Naive thymus-derived CD4-positive, alpha-beta T cell (primary cell): ENCODE measurements at regions of chr5 and their contacts with region 1.

Region 1: DNA sequence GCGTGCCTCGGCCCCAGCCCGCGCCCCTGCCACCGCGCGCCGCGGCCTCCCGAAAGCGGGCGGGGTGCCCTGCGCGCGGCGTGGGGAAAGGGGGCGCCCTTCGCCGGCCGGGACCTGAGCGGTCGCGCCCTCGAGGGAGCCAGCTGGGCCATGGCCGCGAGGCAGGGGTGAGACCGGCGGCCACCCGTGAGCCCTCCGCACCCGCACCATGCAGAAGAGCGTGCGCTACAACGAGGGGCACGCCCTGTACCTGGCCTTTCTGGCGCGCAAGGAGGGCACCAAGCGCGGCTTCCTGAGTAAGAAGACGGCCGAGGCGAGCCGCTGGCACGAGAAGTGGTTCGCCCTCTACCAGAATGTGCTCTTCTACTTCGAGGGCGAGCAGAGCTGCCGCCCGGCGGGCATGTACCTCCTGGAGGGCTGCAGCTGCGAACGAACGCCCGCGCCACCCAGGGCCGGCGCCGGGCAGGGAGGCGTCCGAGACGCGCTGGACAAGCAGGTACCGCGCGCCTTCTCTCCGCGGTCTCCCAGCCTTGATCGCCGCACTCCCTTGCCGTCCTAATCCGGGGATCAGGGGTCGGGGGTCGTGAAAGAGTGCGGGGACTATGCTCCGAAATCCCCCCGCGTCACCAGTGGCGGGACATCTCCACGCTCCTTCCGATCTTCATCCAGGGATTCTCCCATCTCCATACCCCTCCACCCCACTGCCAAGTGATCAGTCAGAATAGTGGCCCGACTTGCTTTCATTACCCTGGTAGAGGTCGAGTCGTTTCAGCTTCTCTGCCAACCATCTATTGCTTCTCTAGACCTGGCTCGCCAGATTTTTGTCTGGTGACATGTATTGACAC is 590 bp downstream of the RASGRF2 start:
- DNase-seq: peak in 8 of 9 donors; percentile 23 to 67 (median 50)
- ATAC-seq: peak; percentile 53
- H3K4me3 ChIP-seq: peak overlapping the region; percentile 85
- H3K4me3 Mint-ChIP-seq: peak overlapping the region; percentile 87 to 99 (median 94)
- H3K27ac ChIP-seq: peak overlapping the region; percentile 70
- H3K27ac Mint-ChIP-seq: peak overlapping the region; percentile 79 to 98 (median 88)
- H3K4me1 ChIP-seq: peaks cover 22 to 35% of the 10 kb centered on the region in 2 donors
- H3K4me1 Mint-ChIP-seq: peaks cover 35 to 76% (median 63%) of the 10 kb centered on the region in 7 donors
- H3K27me3 ChIP-seq: no peaks in the 10 kb centered on the region
- H3K27me3 Mint-ChIP-seq: peaks cover 0 to 12% (median 5%) of the 10 kb centered on the region in 5 donors

Region 2: DNA sequence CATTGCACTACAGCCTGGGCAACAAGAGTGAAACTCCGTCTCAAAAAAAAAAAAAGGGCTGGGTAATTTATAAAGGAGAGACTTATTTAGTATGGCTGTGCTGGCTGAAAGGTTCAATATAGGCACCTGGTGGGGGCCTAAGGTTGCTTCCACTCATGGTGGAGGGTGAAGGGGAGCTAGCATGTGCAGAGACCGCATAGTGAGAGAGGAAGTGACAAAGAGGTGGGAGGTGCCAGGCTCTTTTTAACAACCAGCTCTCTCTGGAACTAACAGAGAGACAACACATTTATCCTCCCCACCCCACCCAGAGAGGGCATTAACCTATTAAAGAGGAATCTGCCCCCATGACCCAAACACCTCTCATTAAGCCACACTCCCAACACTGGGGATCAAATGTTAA is 676.0 kb before region 1 on chr5:
- CTCF ChIA-PET with region 1: no interaction called
- POLR2A ChIA-PET with region 1: no interaction called
- intact Hi-C with region 1: no loop called
- DNase-seq: peak in 7 of 9 donors; percentile 21 to 49 (median 34)
- ATAC-seq: peak; percentile 83
- H3K4me3 ChIP-seq: no peak overlapping the region
- H3K4me3 Mint-ChIP-seq: peak overlapping the region in 9 of 10 donors; percentile 14 to 69 (median 49)
- H3K27ac ChIP-seq: no peak overlapping the region
- H3K27ac Mint-ChIP-seq: peak overlapping the region in 8 of 9 donors; percentile 58 to 93 (median 74)
- H3K4me1 ChIP-seq: peaks cover 0 to 10% of the 10 kb centered on the region in 2 donors
- H3K4me1 Mint-ChIP-seq: peaks cover 12 to 39% (median 27%) of the 10 kb centered on the region in 7 donors
- H3K27me3 ChIP-seq: no peaks in the 10 kb centered on the region
- H3K27me3 Mint-ChIP-seq: no peaks in the 10 kb centered on the region

Region 3: DNA sequence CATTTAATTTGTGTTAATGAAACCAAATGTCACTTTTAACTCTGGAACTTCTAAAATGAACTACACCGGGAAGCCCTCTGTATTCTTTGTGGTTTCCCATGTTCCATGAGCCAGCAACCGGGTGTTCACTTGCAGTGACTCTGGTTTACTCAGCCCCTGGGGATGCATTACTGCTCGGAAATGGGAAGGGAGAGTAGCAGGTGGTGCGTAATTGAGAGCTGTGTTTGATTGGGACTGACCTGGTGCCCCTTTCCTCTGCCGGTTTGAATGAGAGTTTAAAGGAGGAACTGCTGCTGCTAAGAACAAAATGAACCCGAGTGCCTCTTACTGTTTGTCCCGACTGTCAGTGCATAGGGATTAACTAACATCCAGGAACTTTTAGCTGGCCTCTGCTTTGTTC is 205.9 kb before region 1 on chr5:
- CTCF ChIA-PET with region 1: no interaction called
- POLR2A ChIA-PET with region 1: no interaction called
- intact Hi-C with region 1: loop called in 1 of 2 experiments (anchors 1 kb)
- DNase-seq: peak in 2 of 9 donors; percentile 11 to 49
- ATAC-seq: no peak
- H3K4me3 ChIP-seq: peak overlapping the region; percentile 7
- H3K4me3 Mint-ChIP-seq: peak overlapping the region; percentile 49 to 87 (median 78)
- H3K27ac ChIP-seq: peak overlapping the region; percentile 57
- H3K27ac Mint-ChIP-seq: peak overlapping the region; percentile 45 to 93 (median 79)
- H3K4me1 ChIP-seq: peaks cover 20 to 28% of the 10 kb centered on the region in 2 donors
- H3K4me1 Mint-ChIP-seq: peaks cover 30 to 61% (median 47%) of the 10 kb centered on the region in 7 donors
- H3K27me3 ChIP-seq: no peaks in the 10 kb centered on the region
- H3K27me3 Mint-ChIP-seq: no peaks in the 10 kb centered on the region

Region 4: DNA sequence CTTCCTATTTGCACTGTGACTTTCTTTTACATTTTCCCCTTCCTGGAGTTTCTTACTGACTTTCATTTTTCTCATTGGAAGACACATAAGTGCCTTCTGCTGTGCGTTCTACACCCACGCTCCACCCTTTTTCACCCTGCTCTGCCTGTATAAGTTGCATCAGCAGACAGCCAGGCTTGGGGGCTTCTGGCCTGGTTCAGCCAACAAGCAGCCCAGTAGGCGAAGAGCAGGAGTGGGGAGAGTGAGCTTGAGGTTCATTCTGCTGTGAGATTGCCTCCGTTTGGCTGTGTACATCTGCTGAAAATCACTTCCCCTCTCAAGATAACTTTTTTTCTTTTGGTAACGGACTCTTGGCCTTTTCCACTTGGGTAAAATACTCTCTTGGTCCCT is 37.8 kb after region 1 on chr5:
- CTCF ChIA-PET with region 1: no interaction called
- POLR2A ChIA-PET with region 1: interaction called, 8 read pairs
- intact Hi-C with region 1: loop called in 1 of 2 experiments (anchors 2 kb)
- DNase-seq: peak in 2 of 9 donors; percentile 20 to 40
- ATAC-seq: peak; percentile 18
- H3K4me3 ChIP-seq: peak overlapping the region; percentile 62
- H3K4me3 Mint-ChIP-seq: peak overlapping the region; percentile 69 to 87 (median 86)
- H3K27ac ChIP-seq: peak overlapping the region; percentile 74
- H3K27ac Mint-ChIP-seq: peak overlapping the region; percentile 74 to 99 (median 93)
- H3K4me1 ChIP-seq: peaks cover 0 to 47% of the 10 kb centered on the region in 2 donors
- H3K4me1 Mint-ChIP-seq: peaks cover 22 to 94% (median 78%) of the 10 kb centered on the region in 7 donors
- H3K27me3 ChIP-seq: no peaks in the 10 kb centered on the region
- H3K27me3 Mint-ChIP-seq: no peaks in the 10 kb centered on the region

Region 5: DNA sequence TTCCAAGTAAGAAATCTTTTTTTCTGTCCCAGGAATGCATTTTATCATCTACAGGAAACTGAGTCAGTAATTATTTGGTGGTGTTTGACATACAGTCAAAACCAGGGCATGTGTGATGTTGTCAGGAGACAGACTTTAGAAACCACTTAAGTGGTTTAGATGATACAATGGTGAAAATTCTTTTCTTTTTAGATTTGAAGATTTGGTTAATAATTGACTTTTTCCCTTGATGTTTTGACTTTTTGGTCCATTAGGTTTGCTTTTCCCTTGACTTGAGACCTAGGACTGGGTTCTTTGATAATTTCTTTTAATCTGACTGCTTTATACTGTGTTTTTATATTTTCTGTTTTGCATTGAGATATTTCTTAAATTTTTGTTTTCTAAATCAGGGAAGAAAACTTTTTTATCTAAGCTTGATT is 84.6 kb after region 1 on chr5:
- CTCF ChIA-PET with region 1: no interaction called
- POLR2A ChIA-PET with region 1: interaction called, 3 read pairs
- intact Hi-C with region 1: loop called in 1 of 2 experiments (anchors 1 kb)
- DNase-seq: no peak
- ATAC-seq: no peak
- H3K4me3 ChIP-seq: no peak overlapping the region
- H3K4me3 Mint-ChIP-seq: no peak overlapping the region
- H3K27ac ChIP-seq: no peak overlapping the region
- H3K27ac Mint-ChIP-seq: peak overlapping the region in 3 of 9 donors; percentile 5 to 38 (median 23)
- H3K4me1 ChIP-seq: peaks cover 0 to 11% of the 10 kb centered on the region in 2 donors
- H3K4me1 Mint-ChIP-seq: peaks cover 11 to 92% (median 73%) of the 10 kb centered on the region in 7 donors
- H3K27me3 ChIP-seq: no peaks in the 10 kb centered on the region
- H3K27me3 Mint-ChIP-seq: no peaks in the 10 kb centered on the region

Region 6: DNA sequence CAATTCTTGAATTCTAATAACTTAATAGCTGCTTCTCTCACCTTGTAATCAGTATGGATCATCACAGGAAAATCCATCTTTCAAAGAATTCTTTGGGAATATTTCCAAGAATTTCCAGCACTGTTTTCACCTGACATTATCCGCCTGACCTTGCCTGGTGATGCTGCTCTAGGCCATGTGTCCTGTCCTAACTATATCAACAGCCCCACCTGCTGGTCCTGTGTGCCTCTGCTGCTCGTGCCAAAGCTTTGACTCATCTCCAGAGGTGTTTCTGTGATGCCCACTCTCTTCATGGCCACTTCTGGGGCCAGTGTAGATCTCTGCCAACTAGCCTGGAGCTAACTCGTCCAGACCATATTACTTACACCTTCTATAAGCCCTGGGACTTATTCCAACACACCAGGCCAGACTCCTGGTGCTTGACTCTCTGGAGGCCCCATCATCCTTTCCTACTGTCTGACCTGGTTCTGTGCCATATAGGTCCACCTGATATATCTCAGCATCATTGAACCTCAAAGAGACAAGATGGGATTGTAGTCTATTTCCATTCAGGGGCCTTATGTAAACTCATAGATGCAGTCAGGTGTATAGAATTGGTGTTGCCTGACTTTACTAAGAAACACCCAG is 204.9 kb after region 1 on chr5:
- CTCF ChIA-PET with region 1: no interaction called
- POLR2A ChIA-PET with region 1: no interaction called
- intact Hi-C with region 1: loop called in 1 of 2 experiments (anchors 10 kb)
- DNase-seq: peak in 8 of 9 donors; percentile 18 to 55 (median 43)
- ATAC-seq: peak; percentile 73
- H3K4me3 ChIP-seq: no peak overlapping the region
- H3K4me3 Mint-ChIP-seq: no peak overlapping the region
- H3K27ac ChIP-seq: no peak overlapping the region
- H3K27ac Mint-ChIP-seq: peak overlapping the region in 3 of 9 donors; percentile 7 to 20 (median 14)
- H3K4me1 ChIP-seq: no peaks in the 10 kb centered on the region
- H3K4me1 Mint-ChIP-seq: peaks cover 0 to 13% (median 3%) of the 10 kb centered on the region in 7 donors
- H3K27me3 ChIP-seq: no peaks in the 10 kb centered on the region
- H3K27me3 Mint-ChIP-seq: no peaks in the 10 kb centered on the region

Region 7: DNA sequence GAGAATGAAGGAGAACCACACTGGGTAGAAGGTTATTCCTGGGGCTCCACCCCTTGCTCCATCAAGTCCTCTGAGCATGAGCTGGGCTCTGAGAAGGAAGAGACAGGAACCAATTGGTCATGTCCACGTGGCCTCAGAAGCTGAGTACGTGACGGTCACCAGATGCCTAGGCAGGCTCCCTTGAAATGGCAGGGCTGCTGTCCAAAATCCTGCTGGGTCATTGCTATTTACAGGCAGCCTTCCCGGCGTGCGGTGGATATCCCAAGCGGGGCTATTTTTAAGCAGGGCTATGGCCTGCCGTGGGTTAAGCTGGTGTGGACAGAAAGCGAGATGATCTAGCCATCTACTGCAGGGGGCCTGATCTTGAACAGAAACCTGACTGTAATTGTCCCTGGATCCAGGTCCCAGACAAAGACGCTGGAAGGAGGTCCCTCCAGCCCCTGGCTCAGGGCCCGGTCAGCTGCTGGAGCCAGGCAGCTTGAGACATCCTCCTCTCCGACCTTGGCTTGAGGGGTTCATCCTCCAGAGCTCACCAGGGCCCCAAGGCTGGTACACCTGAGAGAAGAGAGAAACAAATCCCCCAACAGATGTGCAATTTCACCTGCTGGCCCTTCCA is 271.8 kb after region 1 on chr5:
- CTCF ChIA-PET with region 1: no interaction called
- POLR2A ChIA-PET with region 1: no interaction called
- intact Hi-C with region 1: no loop called
- DNase-seq: no peak
- ATAC-seq: no peak
- H3K4me3 ChIP-seq: no peak overlapping the region
- H3K4me3 Mint-ChIP-seq: peak overlapping the region in 3 of 10 donors; percentile 21 to 51 (median 51)
- H3K27ac ChIP-seq: no peak overlapping the region
- H3K27ac Mint-ChIP-seq: no peak overlapping the region
- H3K4me1 ChIP-seq: peaks cover 7 to 10% of the 10 kb centered on the region in 2 donors
- H3K4me1 Mint-ChIP-seq: peaks cover 6 to 32% (median 20%) of the 10 kb centered on the region in 7 donors
- H3K27me3 ChIP-seq: no peaks in the 10 kb centered on the region
- H3K27me3 Mint-ChIP-seq: no peaks in the 10 kb centered on the region

Region 8: GRCh38 chr5:82278095-82278918 is 1317.6 kb after region 1 on chr5 and contains the start of gene RPS23:
- CTCF ChIA-PET with region 1: no interaction called
- POLR2A ChIA-PET with region 1: no interaction called
- intact Hi-C with region 1: loop called in 1 of 2 experiments (anchors 1 kb)
- DNase-seq: peak; percentile 78 to 90 (median 85)
- ATAC-seq: peak; percentile 96
- H3K4me3 ChIP-seq: peak within 1 kb of the TSS; percentile 72
- H3K4me3 Mint-ChIP-seq: peak within 1 kb of the TSS; percentile 87 to 98 (median 94)
- H3K27ac ChIP-seq: peak within 1 kb of the TSS; percentile 80
- H3K27ac Mint-ChIP-seq: peak within 1 kb of the TSS; percentile 94 to 99 (median 96)
- H3K4me1 ChIP-seq: peaks cover 12 to 16% of the 10 kb centered on the region in 2 donors
- H3K4me1 Mint-ChIP-seq: peaks cover 13 to 65% (median 39%) of the 10 kb centered on the region in 7 donors
- H3K27me3 ChIP-seq: no peaks in the 10 kb centered on the region
- H3K27me3 Mint-ChIP-seq: no peaks in the 10 kb centered on the region
- total RNA-seq, gene RPS23: 2,233 to 4,335 (median 3,874) TPM